Panc1 (cell line): ENCODE measurements at regions of chr2 and their contacts with region 1.

Region 1: DNA sequence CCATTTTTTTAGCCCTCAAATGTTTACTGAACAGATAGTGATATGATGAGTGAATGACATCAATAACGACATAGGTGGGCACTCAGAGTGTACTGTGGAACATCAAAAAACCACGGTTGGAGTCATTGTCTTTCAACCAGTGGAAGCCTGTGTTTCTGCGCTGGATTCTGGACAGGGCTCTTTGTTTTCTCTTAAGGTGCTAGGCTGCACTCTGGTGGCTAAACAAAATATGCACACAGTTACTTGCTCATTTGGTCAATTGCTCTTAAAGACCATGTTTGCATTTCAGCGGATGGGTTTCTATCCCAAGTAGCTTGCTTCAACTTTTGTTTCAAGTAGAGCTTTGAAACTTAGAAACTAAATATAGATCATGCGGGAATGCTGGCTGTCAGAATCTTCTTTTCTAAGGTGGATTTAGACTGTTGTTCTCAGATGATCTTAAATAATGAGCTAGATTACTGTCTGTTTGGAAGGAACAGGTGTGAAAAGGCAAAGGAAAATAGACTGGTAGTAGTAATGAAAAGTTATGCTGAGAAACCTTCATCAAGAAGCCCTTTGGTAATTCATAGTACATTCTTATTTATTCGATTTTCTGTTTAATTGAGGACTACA is 48.5 kb upstream of the LYPD6B start:
- DNase-seq: peak; percentile 41
- ATAC-seq: peak; percentile 94
- H3K4me3 ChIP-seq: no peak overlapping the region
- H3K27ac ChIP-seq: no peak overlapping the region
- H3K4me1 ChIP-seq: no peaks in the 10 kb centered on the region
- H3K27me3 ChIP-seq: no peaks in the 10 kb centered on the region
- CTCF ChIP-seq: peak; percentile 77

Region 2: GRCh38 chr2:147937744-147938349 is 1052.1 kb before region 1 on chr2:
- CTCF ChIA-PET with region 1: no interaction called
- POLR2A ChIA-PET with region 1: no interaction called
- in situ Hi-C with region 1: no loop called
- intact Hi-C with region 1: loop called (anchors 1 kb)
- DNase-seq: peak; percentile 15
- ATAC-seq: no peak
- H3K4me3 ChIP-seq: no peak overlapping the region
- H3K27ac ChIP-seq: no peak overlapping the region
- H3K4me1 ChIP-seq: no peaks in the 10 kb centered on the region
- H3K27me3 ChIP-seq: no peaks in the 10 kb centered on the region
- CTCF ChIP-seq: peak; percentile 79; the same call in 1 of the 2 replicates

Region 3: DNA sequence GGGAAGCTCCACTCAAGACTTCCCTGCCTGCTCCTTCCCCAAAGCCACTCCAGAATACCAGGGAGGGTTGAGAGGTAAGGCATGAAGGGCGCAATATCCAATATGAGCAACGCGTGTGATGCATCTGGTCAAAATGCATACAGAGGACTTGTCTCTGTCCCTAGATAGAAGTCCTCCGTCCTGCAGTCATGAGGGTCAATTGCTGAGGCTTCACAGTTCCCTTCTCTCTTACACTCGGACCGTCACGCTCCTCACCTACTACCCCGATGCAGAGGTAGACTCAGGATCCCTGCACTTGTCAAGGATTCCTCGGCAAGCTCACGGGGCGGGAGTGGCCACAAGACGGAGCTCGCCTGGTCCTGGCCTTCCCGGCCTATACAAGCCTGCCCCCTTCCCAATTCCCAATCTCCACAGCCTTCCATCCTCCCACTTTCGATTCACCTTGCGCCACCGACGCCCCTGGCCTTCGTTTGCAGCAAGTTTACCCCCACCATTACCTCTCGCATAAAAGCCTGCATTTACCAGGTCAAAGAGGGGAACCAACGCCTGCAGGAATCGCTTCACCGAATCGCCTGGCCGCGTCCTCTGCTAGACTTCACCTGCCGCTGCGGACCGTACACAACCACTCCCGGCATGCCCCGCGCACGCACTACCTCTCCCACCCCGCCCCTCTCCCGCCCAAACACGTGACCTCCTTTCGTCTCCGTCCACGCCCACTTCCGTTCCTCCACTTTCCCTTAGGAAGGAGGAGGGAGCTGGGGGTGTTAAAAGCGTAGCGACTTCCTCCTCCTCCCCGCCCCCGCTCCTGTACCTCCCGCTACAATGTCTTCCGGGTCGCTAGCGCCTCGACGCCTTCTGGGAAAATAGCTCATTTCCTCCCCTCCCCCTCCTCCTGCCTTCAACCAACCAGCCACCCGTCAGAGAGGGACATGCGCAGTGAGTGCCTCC is 969.6 kb before region 1 on chr2 and contains the start of gene ORC4:
- CTCF ChIA-PET with region 1: interaction called, 11 read pairs
- POLR2A ChIA-PET with region 1: no interaction called
- in situ Hi-C with region 1: no loop called
- intact Hi-C with region 1: no loop called
- DNase-seq: peak; percentile 95
- ATAC-seq: peak; percentile 96
- H3K4me3 ChIP-seq: peak within 1 kb of the TSS; percentile 93 to 98
- H3K27ac ChIP-seq: peak within 1 kb of the TSS; percentile 96
- H3K4me1 ChIP-seq: peaks cover 24% of the 10 kb centered on the region; the same call in 1 of the 2 replicates
- H3K27me3 ChIP-seq: no peaks in the 10 kb centered on the region
- CTCF ChIP-seq: peak; percentile 72
- total RNA-seq, gene ORC4: 43.3 TPM

Region 4: GRCh38 chr2:148874868-148875341 is 115.1 kb before region 1 on chr2 and contains the start of gene KIF5C:
- CTCF ChIA-PET with region 1: no interaction called
- POLR2A ChIA-PET with region 1: no interaction called
- in situ Hi-C with region 1: no loop called
- intact Hi-C with region 1: no loop called
- DNase-seq: no peak
- ATAC-seq: peak; percentile 95
- H3K4me3 ChIP-seq: peak within 1 kb of the TSS; percentile 23 to 40
- H3K27ac ChIP-seq: no peak within 1 kb of the TSS
- H3K4me1 ChIP-seq: peaks cover 5% of the 10 kb centered on the region; the same call in 1 of the 2 replicates
- H3K27me3 ChIP-seq: peaks cover 18% of the 10 kb centered on the region
- CTCF ChIP-seq: no peak
- total RNA-seq, gene KIF5C: 1.6 TPM

Region 5: GRCh38 chr2:149087751-149088150 is 97.8 kb after region 1 on chr2:
- CTCF ChIA-PET with region 1: no interaction called
- POLR2A ChIA-PET with region 1: no interaction called
- in situ Hi-C with region 1: no loop called
- intact Hi-C with region 1: no loop called
- DNase-seq: no peak
- ATAC-seq: no peak
- H3K4me3 ChIP-seq: no peak overlapping the region
- H3K27ac ChIP-seq: no peak overlapping the region
- H3K4me1 ChIP-seq: no peaks in the 10 kb centered on the region
- H3K27me3 ChIP-seq: no peaks in the 10 kb centered on the region; the same call in 1 of the 2 replicates
- CTCF ChIP-seq: peak; percentile 47